ENCODE measurements at regions of chr14 and their contacts with region 1.

Region 1: GRCh38 chr14:64671591-64671990 is 32.6 kb upstream of the PLEKHG3 start:
- DNase-seq: no peak
- ATAC-seq: peak in 3 of 4 donors; percentile 49 to 67 (median 54)
- H3K4me3 ChIP-seq: no peak overlapping the region
- H3K27ac ChIP-seq: no peak overlapping the region
- H3K4me1 ChIP-seq: no peaks in the 10 kb centered on the region
- H3K27me3 ChIP-seq: no peaks in the 10 kb centered on the region
- CTCF ChIP-seq: peak; percentile 68

Region 2: GRCh38 chr14:64745511-64746091 is 74.0 kb after region 1 on chr14:
- intact Hi-C with region 1: loop called in 1 of 2 experiments (anchors 5 kb)
- DNase-seq: peak in 1 of 2 donors; percentile 66
- ATAC-seq: peak; percentile 44 to 70 (median 61)
- H3K4me3 ChIP-seq: no peak overlapping the region
- H3K27ac ChIP-seq: peak overlapping the region; percentile 70
- H3K4me1 ChIP-seq: peaks cover 20% of the 10 kb centered on the region
- H3K27me3 ChIP-seq: no peaks in the 10 kb centered on the region
- CTCF ChIP-seq: no peak

Region 3: GRCh38 chr14:64764641-64765520 is 93.3 kb after region 1 on chr14:
- intact Hi-C with region 1: loop called (anchors 1 to 2 kb)
- DNase-seq: peak; percentile 72 to 85
- ATAC-seq: peak; percentile 35 to 67 (median 40)
- H3K4me3 ChIP-seq: peak overlapping the region; percentile 29
- H3K27ac ChIP-seq: peak overlapping the region; percentile 58
- H3K4me1 ChIP-seq: peaks cover 20% of the 10 kb centered on the region
- H3K27me3 ChIP-seq: no peaks in the 10 kb centered on the region
- CTCF ChIP-seq: peak; percentile 76

Region 4: DNA sequence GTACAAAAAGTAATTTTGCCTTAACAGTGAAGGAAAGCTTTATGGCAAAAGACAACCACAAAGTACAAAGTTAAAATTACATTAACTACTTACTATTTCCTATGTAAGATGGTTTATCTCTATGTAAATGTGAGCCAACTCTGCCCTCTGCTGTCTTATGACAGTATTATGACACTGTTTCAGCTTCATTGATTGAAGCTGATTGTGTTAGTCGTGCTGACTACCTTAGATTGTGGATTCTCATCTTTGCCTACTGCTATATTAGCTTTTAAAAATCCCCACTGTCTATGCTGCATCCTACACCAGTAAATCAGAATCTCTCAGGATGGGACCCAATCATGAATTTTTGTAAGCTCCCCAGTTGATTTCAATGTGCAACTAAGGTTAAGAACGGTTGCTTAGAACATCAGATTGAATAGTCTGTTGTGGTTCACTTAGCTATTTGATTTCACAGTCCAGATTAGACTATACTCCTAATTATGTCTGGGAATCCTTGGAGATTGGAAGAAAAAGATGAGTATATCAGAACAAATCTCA is 220.3 kb after region 1 on chr14:
- intact Hi-C with region 1: loop called in 1 of 2 experiments (anchors 5 kb)
- DNase-seq: no peak
- ATAC-seq: peak; percentile 94 to 98 (median 95)
- H3K4me3 ChIP-seq: no peak overlapping the region
- H3K27ac ChIP-seq: peak overlapping the region; percentile 13
- H3K4me1 ChIP-seq: peaks cover 9% of the 10 kb centered on the region
- H3K27me3 ChIP-seq: no peaks in the 10 kb centered on the region
- CTCF ChIP-seq: peak; percentile 72